ENCODE measurements at regions of chr13 and their contacts with region 1.

Region 1: DNA sequence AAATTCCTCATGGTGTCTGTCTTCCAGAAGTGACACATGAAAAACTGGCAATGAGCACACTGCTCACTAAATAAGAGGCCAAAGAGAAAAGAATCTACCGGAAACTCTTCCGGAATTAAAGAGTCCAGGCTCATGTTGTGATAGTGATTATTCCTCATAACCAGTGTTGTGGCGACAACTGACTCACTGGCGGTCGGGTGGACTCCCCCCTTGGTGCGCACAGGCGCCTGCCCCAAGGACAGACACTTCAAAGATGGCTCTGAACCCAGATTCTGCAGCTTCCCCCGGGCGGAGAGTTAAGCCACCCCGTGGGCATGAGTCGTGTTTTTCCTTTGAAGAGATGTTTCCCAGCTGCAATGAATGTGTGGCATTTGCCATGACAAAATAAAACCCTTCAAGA is 10.3 kb downstream of the IL17D start:
- DNase-seq: no peak
- ATAC-seq: peak; percentile 29

Region 2: GRCh38 chr13:20387441-20387971 is 326.2 kb before region 1 on chr13:
- intact Hi-C with region 1: no loop called
- DNase-seq: no peak
- ATAC-seq: no peak

Region 3: GRCh38 chr13:20869542-20869941 is 155.8 kb after region 1 on chr13:
- intact Hi-C with region 1: loop called (anchors 5 kb)
- DNase-seq: no peak
- ATAC-seq: peak; percentile 54